ENCODE measurements at regions of chr11 and their contacts with region 1.

Region 1: GRCh38 chr11:32983506-32983905 is 32.2 kb upstream of the DEPDC7 start:
- DNase-seq: no peak
- H3K4me3 ChIP-seq: no peak overlapping the region
- CTCF ChIP-seq: no peak

Region 2: GRCh38 chr11:32884770-32885384 is 98.6 kb before region 1 on chr11:
- in situ Hi-C with region 1: no loop called
- DNase-seq: no peak
- H3K4me3 ChIP-seq: no peak overlapping the region
- CTCF ChIP-seq: peak; percentile 59

Region 3: GRCh38 chr11:33065445-33066178 is 82.1 kb after region 1 on chr11:
- in situ Hi-C with region 1: loop called (anchors 5 kb)
- DNase-seq: peak; percentile 32
- H3K4me3 ChIP-seq: no peak overlapping the region
- CTCF ChIP-seq: peak; percentile 91

Region 4: GRCh38 chr11:33110083-33110482 is 126.6 kb after region 1 on chr11:
- in situ Hi-C with region 1: no loop called
- DNase-seq: no peak
- H3K4me3 ChIP-seq: no peak overlapping the region
- CTCF ChIP-seq: no peak